Activated naive CD4-positive, alpha-beta T cell treated with anti-CD3 and anti-CD28 coated beads for 36 hours (primary cell): ENCODE measurements at regions of chr5 and their contacts with region 1.

Region 1: DNA sequence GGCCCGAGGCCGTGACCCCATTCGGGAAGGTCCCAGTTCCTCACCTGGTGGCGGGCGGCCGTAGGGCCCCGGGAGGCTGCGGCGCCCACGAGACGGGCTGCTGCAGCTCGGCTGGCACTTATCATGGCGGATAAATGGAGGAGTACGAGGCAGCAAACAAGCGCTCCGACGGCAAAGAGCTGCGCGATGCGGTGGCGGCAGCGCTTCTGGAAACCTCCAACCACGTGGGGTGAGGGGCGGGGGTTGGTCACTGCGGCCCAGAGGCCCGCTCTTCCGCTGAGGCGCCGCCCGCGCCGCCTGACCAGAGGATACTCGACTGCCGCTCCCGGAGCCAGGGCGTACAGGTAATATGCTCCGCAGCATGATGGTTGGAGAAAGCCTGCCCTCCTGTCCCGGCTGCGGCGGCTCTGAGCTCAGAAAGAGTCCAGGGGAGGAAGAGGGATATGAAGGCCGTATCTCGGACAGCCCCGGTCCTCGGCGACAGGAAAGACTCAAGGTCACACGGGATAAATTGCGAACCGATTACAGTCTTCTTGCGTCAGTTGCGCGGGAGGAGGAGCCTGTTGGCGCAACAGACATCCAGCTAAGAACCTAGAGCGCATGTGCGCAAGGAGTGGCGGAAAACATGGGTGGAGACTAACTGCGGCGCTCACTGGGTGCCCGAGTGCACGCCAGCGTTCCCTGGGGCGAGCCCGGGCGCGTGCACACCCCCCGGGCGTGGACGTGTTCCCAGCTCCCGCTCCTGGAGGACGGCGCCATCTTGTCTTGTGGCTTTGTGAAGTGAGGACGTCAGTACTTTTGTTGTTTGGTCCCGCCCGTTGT is at the start of gene HSPA9:
- DNase-seq: peak; percentile 99
- H3K4me3 Mint-ChIP-seq: peak within 1 kb of the TSS; percentile 98
- H3K27ac Mint-ChIP-seq: peak within 1 kb of the TSS; percentile 99
- H3K4me1 Mint-ChIP-seq: peaks cover 39% of the 10 kb centered on the region
- H3K27me3 Mint-ChIP-seq: no peaks in the 10 kb centered on the region
- total RNA-seq, gene HSPA9: 457 to 472 TPM

Region 2: GRCh38 chr5:138213161-138214029 is 362.0 kb before region 1 on chr5 and contains the start of gene CDC23:
- CTCF ChIA-PET with region 1: no interaction called
- intact Hi-C with region 1: loop called (anchors 1 kb)
- DNase-seq: peak; percentile 96
- H3K4me3 Mint-ChIP-seq: peak within 1 kb of the TSS; percentile 98
- H3K27ac Mint-ChIP-seq: peak within 1 kb of the TSS; percentile 89
- H3K4me1 Mint-ChIP-seq: peaks cover 18% of the 10 kb centered on the region
- H3K27me3 Mint-ChIP-seq: no peaks in the 10 kb centered on the region
- total RNA-seq, gene CDC23: 44.3 to 47.2 TPM

Region 3: GRCh38 chr5:138464008-138464387 is 111.4 kb before region 1 on chr5:
- CTCF ChIA-PET with region 1: interaction called, 4 read pairs
- intact Hi-C with region 1: loop called (anchors 1 kb)
- DNase-seq: peak; percentile 95
- H3K4me3 Mint-ChIP-seq: peak overlapping the region; percentile 83
- H3K27ac Mint-ChIP-seq: peak overlapping the region; percentile 93
- H3K4me1 Mint-ChIP-seq: peaks cover 59% of the 10 kb centered on the region
- H3K27me3 Mint-ChIP-seq: no peaks in the 10 kb centered on the region

Region 4: DNA sequence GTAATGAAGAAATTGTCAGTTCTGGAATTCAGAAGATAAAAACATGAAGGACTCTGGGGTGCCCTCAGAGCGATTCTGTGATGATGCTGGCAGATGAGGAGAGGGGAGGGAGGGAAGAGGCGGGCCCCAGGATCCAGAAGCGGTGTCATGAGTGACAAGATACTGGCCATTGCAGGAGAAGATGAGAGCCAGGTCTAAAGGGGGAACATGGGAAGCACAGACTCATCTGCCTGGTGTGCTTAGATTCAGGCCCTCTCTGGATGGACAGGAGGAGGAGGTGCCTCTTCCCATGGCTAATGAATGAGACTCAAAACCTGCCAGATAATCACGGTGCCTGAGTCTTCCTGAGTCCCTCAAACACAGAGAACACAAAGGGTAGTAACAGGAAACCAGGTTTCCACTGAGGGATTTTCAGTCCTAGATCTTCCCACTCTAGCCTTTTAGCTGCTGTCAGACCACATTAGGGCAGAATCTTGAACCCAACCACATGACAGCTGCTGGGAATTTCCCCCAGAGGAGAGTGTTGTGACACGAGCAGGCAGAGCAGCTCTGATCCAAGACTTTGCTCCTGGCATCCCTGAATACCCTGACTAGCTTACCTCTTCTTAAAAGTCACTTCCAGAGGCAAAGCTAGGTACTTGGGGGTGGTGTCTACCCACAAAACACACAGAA is 28.0 kb after region 1 on chr5:
- CTCF ChIA-PET with region 1: interaction called, 12 read pairs
- intact Hi-C with region 1: loop called (anchors 2 kb)
- DNase-seq: peak; percentile 62
- H3K4me3 Mint-ChIP-seq: no peak overlapping the region
- H3K27ac Mint-ChIP-seq: no peak overlapping the region
- H3K4me1 Mint-ChIP-seq: peaks cover 19% of the 10 kb centered on the region
- H3K27me3 Mint-ChIP-seq: peaks cover 67% of the 10 kb centered on the region

Region 5: DNA sequence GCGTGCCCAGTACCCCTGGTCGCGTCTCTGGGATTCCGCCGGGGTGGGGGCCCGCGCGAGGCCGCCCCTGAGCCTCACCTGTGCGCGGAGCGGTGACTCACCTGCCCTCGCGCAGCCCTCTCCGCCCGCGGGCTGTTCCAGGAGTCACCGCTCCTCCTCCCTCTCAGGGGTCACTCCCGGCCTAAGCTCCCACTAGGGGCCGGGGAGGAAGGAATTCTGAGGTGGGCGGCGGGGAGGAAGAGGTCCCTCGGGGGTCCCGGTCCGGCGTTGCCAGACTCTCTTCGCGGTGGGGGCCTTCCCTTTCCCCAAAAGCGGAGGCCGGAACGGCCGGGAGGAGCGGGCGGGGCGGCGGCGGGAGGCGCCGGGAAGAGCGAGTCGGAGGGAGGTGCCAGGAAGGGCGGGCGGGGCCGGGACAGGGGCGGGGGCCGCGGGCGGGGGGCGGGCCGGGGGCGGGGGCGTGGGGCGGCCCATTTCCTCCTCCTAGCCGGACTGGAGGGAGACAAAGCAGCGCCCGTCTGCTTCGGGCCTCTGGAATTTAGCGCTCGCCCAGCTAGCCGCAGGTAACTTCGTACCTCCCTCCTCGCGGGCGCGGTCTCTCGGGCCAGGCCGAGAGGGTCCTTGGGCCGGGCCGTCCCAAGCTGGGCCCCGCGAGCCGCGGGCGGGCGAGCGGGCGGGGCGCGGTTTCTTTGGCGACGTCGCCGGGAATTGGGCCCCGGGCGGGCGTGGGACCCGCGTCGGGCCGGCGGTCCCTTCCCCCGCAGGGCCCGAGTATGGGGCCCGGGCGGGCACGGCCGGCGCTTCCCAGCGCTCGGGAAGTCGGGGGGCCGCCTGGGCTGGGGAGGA is 177.8 kb after region 1 on chr5 and contains the start of gene CTNNA1:
- CTCF ChIA-PET with region 1: no interaction called
- intact Hi-C with region 1: loop called (anchors 5 kb)
- DNase-seq: peak; percentile 48
- H3K4me3 Mint-ChIP-seq: peak within 1 kb of the TSS; percentile 74
- H3K27ac Mint-ChIP-seq: peak within 1 kb of the TSS; percentile 32
- H3K4me1 Mint-ChIP-seq: peaks cover 19% of the 10 kb centered on the region
- H3K27me3 Mint-ChIP-seq: peaks cover 48% of the 10 kb centered on the region
- total RNA-seq, gene CTNNA1: 36.8 to 43.0 TPM

Region 6: DNA sequence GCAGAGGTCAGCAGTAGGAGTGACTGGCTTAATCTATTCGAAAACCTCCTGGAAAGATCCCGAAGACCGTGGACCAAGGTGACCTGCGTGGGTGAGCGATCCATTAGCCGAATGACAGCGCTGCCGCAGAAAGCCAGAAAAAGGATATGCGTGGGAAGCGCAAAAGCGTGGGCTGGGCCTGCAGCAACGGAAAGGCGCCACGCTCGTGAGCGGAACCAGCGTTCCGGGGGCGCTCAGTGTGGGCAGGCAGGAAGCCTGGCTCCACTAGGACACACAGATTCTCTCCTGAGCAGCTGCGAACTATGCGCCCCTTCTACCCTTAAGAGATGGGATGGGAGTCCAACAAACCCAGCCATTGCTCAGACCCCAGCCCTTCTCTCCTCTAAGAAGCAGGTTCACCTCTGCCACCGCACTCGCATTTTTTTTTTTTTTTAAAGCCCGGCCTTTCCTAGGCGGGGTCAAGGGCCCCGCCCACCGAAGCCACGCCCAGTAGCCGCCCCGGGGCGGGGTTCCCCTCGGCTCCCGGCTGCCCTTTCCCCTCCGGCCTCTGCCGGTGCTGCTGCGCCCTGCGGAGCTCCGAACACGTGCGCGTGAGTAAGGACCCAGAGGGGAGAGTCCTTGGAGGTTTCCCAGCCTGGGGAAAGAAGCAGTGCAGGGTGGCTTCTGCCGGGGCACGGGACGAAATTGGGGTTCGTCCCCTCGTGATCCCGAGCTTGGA is 698.3 kb after region 1 on chr5:
- CTCF ChIA-PET with region 1: no interaction called
- intact Hi-C with region 1: loop called (anchors 1 kb)
- DNase-seq: peak; percentile 91
- H3K4me3 Mint-ChIP-seq: peak overlapping the region; percentile 93
- H3K27ac Mint-ChIP-seq: peak overlapping the region; percentile 80
- H3K4me1 Mint-ChIP-seq: peaks cover 50% of the 10 kb centered on the region
- H3K27me3 Mint-ChIP-seq: no peaks in the 10 kb centered on the region

Region 7: DNA sequence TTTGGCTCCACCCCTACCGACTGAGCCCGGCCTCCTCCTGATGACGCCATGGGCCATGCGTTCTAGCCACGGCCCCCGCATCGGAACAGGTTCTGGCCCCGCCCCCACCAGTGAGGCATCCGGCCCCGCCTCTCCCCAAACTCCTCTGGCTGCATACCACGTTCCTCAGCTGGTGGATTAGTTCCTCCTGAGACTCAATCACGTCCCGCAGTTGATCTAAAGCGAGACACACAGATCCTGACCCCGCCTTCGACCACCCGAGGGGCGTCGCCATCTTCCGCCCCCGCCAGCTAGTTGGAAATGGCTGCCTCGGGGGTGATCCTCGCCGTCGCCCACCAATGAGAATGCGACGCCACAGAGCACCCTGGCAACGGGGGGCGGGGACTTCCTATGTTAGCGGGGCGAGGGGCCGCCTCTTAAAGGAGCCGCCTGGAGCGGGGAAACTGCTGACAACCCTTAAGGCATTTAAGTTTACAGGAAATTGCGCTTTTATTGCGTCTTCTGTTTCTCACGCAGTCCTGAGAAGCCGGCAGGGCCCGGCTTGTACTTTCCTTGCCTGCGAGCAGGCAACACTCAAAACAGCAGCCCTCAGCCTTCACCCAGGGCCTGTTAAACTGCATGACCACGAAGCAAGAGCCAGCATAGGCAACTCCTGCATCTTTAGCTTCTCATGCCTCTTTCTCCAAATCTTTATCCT is 828.5 kb after region 1 on chr5 and contains the start of gene SPATA24:
- CTCF ChIA-PET with region 1: interaction called, 3 read pairs
- intact Hi-C with region 1: loop called (anchors 5 kb)
- DNase-seq: peak; percentile 99
- H3K4me3 Mint-ChIP-seq: peak within 1 kb of the TSS; percentile 93
- H3K27ac Mint-ChIP-seq: peak within 1 kb of the TSS; percentile 100
- H3K4me1 Mint-ChIP-seq: peaks cover 37% of the 10 kb centered on the region
- H3K27me3 Mint-ChIP-seq: no peaks in the 10 kb centered on the region
- total RNA-seq, gene SPATA24: 6.0 to 7.4 TPM